ENCODE measurements at regions of chr10 and their contacts with region 1.

Region 1: GRCh38 chr10:100289658-100290057 is 3.2 kb upstream of the BLOC1S2 start:
- DNase-seq: no peak
- ATAC-seq: no peak
- H3K4me3 ChIP-seq: no peak overlapping the region
- H3K27ac ChIP-seq: no peak overlapping the region
- H3K4me1 ChIP-seq: no peaks in the 10 kb centered on the region
- H3K27me3 ChIP-seq: no peaks in the 10 kb centered on the region

Region 2: DNA sequence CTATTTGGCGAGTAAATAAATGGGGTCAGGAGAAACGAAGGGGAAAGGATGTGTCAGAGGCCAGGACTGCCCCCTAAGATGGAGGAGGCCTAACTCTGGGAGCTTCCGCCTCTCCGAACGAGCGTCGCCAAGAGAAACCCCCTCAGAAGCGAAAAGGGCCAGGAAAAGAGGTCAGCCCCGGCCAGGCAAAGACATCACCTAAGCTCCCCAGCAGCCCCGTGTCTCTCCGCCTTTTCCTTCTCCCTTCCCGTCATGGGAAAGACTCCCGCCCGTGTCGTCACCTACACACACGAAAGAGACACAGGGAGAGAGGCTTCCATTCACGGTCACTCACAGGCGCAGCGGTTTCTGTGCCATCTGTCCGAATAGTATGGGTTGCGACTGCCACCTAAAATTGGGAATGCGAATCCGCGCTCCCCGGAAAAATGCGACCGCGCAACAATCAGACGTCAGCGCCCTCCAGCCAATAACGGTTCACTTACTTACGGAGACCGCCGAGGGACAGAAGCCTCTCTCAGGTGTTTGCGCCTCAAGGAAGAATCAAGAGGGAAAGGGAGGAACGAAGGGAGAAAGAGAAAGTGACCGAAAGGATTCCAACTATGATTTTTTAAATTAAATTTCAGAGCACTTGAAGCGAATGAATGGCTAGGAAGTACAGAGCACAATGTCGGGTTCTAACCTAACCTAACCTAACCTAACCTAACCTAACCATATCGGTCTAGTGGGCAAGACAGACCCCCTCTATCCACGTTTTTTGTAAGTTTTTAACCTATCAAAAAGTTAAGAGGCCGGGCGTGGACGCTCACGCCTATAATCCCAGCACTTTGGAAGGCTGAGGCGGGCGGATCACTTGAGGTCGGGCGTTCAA is 22.2 kb before region 1 on chr10 and contains the start of gene CWF19L1:
- intact Hi-C with region 1: loop called in 1 of 2 experiments (anchors 2 kb)
- DNase-seq: peak; percentile 91 to 95
- ATAC-seq: peak; percentile 94
- H3K4me3 ChIP-seq: peak within 1 kb of the TSS; percentile 69 to 96
- H3K27ac ChIP-seq: peak within 1 kb of the TSS in 1 of 2 donors; percentile 70
- H3K4me1 ChIP-seq: no peaks in the 10 kb centered on the region
- H3K27me3 ChIP-seq: no peaks in the 10 kb centered on the region
- total RNA-seq, gene CWF19L1: 15.1 to 21.6 TPM

Region 3: GRCh38 chr10:100562008-100562711 is 272.5 kb after region 1 on chr10:
- intact Hi-C with region 1: no loop called
- DNase-seq: peak; percentile 68 to 80
- ATAC-seq: peak; percentile 69
- H3K4me3 ChIP-seq: no peak overlapping the region
- H3K27ac ChIP-seq: no peak overlapping the region
- H3K4me1 ChIP-seq: no peaks in the 10 kb centered on the region
- H3K27me3 ChIP-seq: no peaks in the 10 kb centered on the region

Region 4: DNA sequence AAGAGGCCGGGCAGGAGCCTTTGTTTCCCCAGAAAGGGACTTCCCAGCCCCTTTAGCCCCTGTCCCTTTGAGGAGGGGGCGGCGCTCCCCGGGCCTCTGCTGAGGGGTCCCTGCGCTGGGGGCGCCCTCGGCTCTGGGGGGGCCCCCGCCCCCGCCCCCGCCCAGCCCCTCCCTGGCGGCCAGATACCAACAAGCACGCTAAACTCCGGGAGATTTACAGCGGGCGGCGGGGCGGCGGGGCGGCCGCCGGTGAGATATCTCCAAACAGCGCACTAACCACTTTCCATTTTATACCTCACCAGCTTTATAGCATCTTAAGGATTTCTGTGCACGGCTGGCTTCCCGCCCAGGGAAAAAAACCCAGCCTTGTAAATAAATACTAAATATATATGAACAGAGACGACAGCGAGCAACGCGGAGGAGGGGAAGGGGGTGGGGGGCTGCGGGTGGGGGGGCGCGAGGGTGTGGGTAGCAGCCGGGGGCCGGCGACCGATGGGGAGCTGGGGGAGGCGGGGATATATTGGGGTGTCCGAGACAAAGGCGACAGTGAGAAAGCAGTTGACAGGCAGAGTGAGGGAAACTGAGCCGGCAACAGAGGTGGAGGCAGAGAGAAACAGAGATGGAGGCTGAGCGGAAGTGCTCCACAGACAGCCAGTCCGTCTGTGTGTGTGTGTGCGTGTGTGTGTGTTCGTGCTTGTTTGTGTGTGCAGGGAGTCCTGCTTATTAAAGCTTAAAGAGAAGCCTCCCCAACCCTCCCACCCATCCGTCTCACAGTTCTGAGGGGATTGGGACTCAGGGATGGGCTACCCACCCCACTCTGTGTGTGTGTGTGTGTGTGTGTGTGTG is 331.9 kb after region 1 on chr10:
- intact Hi-C with region 1: no loop called
- DNase-seq: peak in 1 of 2 donors; percentile 50
- ATAC-seq: no peak
- H3K4me3 ChIP-seq: no peak overlapping the region
- H3K27ac ChIP-seq: no peak overlapping the region
- H3K4me1 ChIP-seq: no peaks in the 10 kb centered on the region
- H3K27me3 ChIP-seq: peaks cover 0 to 3% of the 10 kb centered on the region in 2 donors

Measured in aorta (tissue), 5 donors.